ENCODE measurements at regions of chr22 and their contacts with region 1.

Region 1: GRCh38 chr22:40723387-40723933 is 44.2 kb downstream of the MCHR1 start:
- DNase-seq: no peak
- ATAC-seq: no peak
- H3K4me3 ChIP-seq: no peak overlapping the region
- H3K4me3 Mint-ChIP-seq: no peak overlapping the region
- H3K27ac ChIP-seq: no peak overlapping the region
- H3K27ac Mint-ChIP-seq: no peak overlapping the region
- H3K4me1 ChIP-seq: peaks cover 10 to 12% of the 10 kb centered on the region in 2 donors
- H3K4me1 Mint-ChIP-seq: peaks cover 15% of the 10 kb centered on the region
- H3K27me3 ChIP-seq: no peaks in the 10 kb centered on the region
- H3K27me3 Mint-ChIP-seq: peaks cover 18% of the 10 kb centered on the region
- CTCF ChIP-seq: no peak

Region 2: GRCh38 chr22:40572976-40573375 is 150.5 kb before region 1 on chr22:
- CTCF ChIA-PET with region 1: no interaction called
- POLR2A ChIA-PET with region 1: no interaction called
- intact Hi-C with region 1: no loop called
- DNase-seq: no peak
- ATAC-seq: no peak
- H3K4me3 ChIP-seq: no peak overlapping the region
- H3K4me3 Mint-ChIP-seq: no peak overlapping the region
- H3K27ac ChIP-seq: no peak overlapping the region
- H3K27ac Mint-ChIP-seq: no peak overlapping the region
- H3K4me1 ChIP-seq: no peaks in the 10 kb centered on the region
- H3K4me1 Mint-ChIP-seq: no peaks in the 10 kb centered on the region
- H3K27me3 ChIP-seq: no peaks in the 10 kb centered on the region
- H3K27me3 Mint-ChIP-seq: no peaks in the 10 kb centered on the region
- CTCF ChIP-seq: no peak

Region 3: GRCh38 chr22:40709752-40710413 is 13.6 kb before region 1 on chr22:
- CTCF ChIA-PET with region 1: interaction called, 4 read pairs
- POLR2A ChIA-PET with region 1: interaction called, 14 read pairs
- intact Hi-C with region 1: no loop called
- DNase-seq: no peak
- ATAC-seq: no peak
- H3K4me3 ChIP-seq: no peak overlapping the region
- H3K4me3 Mint-ChIP-seq: no peak overlapping the region
- H3K27ac ChIP-seq: no peak overlapping the region
- H3K27ac Mint-ChIP-seq: no peak overlapping the region
- H3K4me1 ChIP-seq: peaks cover 4 to 5% of the 10 kb centered on the region in 2 donors
- H3K4me1 Mint-ChIP-seq: peaks cover 4% of the 10 kb centered on the region
- H3K27me3 ChIP-seq: peaks cover 0 to 13% (median 0%) of the 10 kb centered on the region in 4 experiments
- H3K27me3 Mint-ChIP-seq: peaks cover 13% of the 10 kb centered on the region
- CTCF ChIP-seq: no peak

Measured in B cell (primary cell).